ENCODE measurements at regions of chr3 and their contacts with region 1.

Region 1: DNA sequence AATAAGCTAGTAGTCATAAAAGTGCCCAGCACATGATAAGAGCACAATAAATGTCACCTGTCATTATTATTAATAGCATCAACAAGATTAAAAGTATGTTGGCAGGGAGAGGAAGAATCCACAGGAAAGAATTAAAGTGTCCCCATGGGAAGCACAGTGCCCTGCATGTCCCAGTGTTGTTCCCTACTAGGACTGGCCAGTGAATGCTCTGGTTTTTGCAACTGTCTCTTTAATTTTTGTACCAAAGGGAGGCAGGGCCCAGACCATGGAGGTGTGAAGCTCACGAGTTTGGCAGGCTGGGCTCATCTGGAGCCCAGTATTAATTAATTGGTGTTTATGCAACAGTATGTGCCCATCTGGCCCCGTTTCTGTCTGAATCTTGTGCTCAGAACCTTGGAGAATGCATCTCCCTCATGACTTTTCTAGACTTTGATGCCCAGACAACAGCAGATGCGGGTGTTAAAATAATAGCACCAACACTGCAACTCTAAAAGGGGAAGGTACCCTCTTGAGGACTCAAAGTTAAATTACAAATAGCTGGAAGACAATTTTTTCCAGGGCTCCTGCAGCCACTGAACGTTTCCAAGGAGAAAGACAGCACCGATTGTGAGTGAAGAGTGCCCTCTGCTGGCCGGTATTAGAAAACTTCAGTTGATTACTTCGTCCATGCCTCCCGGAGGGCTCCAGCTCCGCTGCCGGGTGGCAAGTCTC is 71.9 kb upstream of the SPATA12 start:
- DNase-seq: peak; percentile 78
- H3K4me3 Mint-ChIP-seq: no peak overlapping the region
- H3K27ac Mint-ChIP-seq: no peak overlapping the region
- H3K4me1 Mint-ChIP-seq: peaks cover 19% of the 10 kb centered on the region
- H3K27me3 Mint-ChIP-seq: peaks cover 14% of the 10 kb centered on the region

Region 2: GRCh38 chr3:56347219-56347871 is 641.3 kb before region 1 on chr3:
- CTCF ChIA-PET with region 1: no interaction called
- POLR2A ChIA-PET with region 1: no interaction called
- intact Hi-C with region 1: loop called (anchors 5 kb)
- DNase-seq: peak; percentile 54
- H3K4me3 Mint-ChIP-seq: no peak overlapping the region
- H3K27ac Mint-ChIP-seq: no peak overlapping the region
- H3K4me1 Mint-ChIP-seq: no peaks in the 10 kb centered on the region
- H3K27me3 Mint-ChIP-seq: no peaks in the 10 kb centered on the region

Region 3: DNA sequence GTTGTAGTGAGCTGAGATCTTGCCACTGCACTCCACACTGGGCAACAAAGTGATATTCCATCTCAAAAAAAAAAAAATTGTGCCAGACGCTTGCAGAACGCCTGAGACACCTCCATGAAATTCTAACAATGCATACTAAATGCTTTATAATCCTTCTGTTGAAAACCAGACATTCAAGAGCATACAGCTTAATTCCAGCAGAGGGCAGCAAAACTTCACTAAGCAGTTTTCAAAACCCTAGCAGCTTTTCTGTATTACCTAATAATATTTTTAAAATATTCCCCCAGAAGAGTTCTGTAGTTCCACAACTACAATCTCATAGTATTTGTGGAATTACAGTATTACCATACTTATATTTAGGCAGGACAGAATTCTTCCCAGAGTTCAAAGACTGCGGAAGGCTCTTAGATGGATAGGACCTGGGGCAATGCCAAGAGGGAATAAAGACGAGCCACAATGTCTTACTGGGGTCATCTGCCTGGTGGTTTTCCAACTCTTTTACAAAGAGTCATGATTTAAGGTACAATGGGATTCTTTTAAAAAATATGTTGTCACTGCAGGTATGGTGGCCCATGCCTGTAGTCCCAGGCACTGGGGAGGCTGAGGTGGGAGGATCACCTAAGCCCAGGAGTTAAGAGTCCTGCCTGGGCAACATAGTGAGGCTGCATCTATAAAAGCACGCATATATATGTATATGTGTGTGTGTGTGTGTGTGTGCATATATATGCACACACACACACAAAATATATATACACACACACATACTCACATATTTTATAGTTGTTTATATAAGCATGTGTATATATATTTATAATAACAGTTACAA is 285.9 kb before region 1 on chr3:
- CTCF ChIA-PET with region 1: interaction called, 244 read pairs
- POLR2A ChIA-PET with region 1: interaction called, 7 read pairs
- intact Hi-C with region 1: loop called (anchors 1 kb)
- DNase-seq: peak; percentile 36
- H3K4me3 Mint-ChIP-seq: no peak overlapping the region
- H3K27ac Mint-ChIP-seq: no peak overlapping the region
- H3K4me1 Mint-ChIP-seq: peaks cover 11% of the 10 kb centered on the region
- H3K27me3 Mint-ChIP-seq: no peaks in the 10 kb centered on the region

Region 4: GRCh38 chr3:56769116-56769707 is 219.4 kb before region 1 on chr3:
- CTCF ChIA-PET with region 1: interaction called, 10 read pairs
- POLR2A ChIA-PET with region 1: no interaction called
- intact Hi-C with region 1: no loop called
- DNase-seq: no peak
- H3K4me3 Mint-ChIP-seq: no peak overlapping the region
- H3K27ac Mint-ChIP-seq: no peak overlapping the region
- H3K4me1 Mint-ChIP-seq: peaks cover 62% of the 10 kb centered on the region
- H3K27me3 Mint-ChIP-seq: no peaks in the 10 kb centered on the region

Region 5: GRCh38 chr3:56812754-56813650 is 175.6 kb before region 1 on chr3:
- CTCF ChIA-PET with region 1: interaction called, 221 read pairs
- POLR2A ChIA-PET with region 1: no interaction called
- intact Hi-C with region 1: no loop called
- DNase-seq: no peak
- H3K4me3 Mint-ChIP-seq: no peak overlapping the region
- H3K27ac Mint-ChIP-seq: peak overlapping the region; percentile 75
- H3K4me1 Mint-ChIP-seq: peaks cover 78% of the 10 kb centered on the region
- H3K27me3 Mint-ChIP-seq: no peaks in the 10 kb centered on the region

Region 6: GRCh38 chr3:56849698-56850097 is 138.9 kb before region 1 on chr3:
- CTCF ChIA-PET with region 1: interaction called, 10 read pairs
- POLR2A ChIA-PET with region 1: no interaction called
- intact Hi-C with region 1: no loop called
- DNase-seq: no peak
- H3K4me3 Mint-ChIP-seq: no peak overlapping the region
- H3K27ac Mint-ChIP-seq: no peak overlapping the region
- H3K4me1 Mint-ChIP-seq: peaks cover 34% of the 10 kb centered on the region
- H3K27me3 Mint-ChIP-seq: no peaks in the 10 kb centered on the region

Region 7: DNA sequence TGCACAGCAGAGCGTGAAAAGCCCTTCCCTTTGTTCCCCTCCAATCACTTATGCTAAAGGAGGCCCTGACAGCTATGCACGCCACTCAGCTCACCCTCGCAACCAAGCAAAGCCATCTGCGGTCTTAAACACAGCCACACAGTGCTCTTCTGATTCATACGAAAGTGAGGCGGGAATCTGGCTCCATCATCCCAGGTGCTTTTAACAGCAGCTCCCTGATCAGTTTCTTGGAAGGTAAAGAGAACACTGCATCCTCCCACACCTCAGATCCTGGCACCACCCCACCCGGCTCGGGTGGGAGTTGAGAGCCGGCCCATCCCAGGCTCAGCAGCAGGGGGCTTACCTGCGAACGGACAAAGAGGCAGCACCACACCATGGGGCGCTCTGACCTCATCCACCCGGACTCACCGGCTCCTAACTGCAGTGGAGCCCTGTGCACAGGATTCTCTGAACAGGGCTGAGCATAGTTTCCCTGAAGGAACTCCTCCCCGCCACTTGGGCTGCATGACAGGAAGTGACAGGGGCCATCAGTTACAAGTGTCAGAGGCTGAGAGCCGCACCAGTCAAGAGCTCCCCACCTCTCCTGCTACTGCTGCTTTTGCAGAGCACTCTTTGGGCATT is 72.5 kb before region 1 on chr3:
- CTCF ChIA-PET with region 1: interaction called, 9 read pairs
- POLR2A ChIA-PET with region 1: no interaction called
- intact Hi-C with region 1: loop called (anchors 2 kb)
- DNase-seq: peak; percentile 87
- H3K4me3 Mint-ChIP-seq: peak overlapping the region; percentile 74
- H3K27ac Mint-ChIP-seq: peak overlapping the region; percentile 92
- H3K4me1 Mint-ChIP-seq: peaks cover 69% of the 10 kb centered on the region
- H3K27me3 Mint-ChIP-seq: no peaks in the 10 kb centered on the region